Activated T-helper 1 cell treated with anti-CD3 and anti-CD28 coated beads, Interleukin-12 subunit alpha, Interleukin-12 subunit beta, Interleukin-2, Interleukin-4 antibody, amounts not matched to agents 30 ng/mL and 10 ng/mL and 1 ng/mL, durations not matched to agents 14 hours and 24 hours and 36 hours (primary cell): ENCODE measurements at regions of chr1 and their contacts with region 1.

Region 1: DNA sequence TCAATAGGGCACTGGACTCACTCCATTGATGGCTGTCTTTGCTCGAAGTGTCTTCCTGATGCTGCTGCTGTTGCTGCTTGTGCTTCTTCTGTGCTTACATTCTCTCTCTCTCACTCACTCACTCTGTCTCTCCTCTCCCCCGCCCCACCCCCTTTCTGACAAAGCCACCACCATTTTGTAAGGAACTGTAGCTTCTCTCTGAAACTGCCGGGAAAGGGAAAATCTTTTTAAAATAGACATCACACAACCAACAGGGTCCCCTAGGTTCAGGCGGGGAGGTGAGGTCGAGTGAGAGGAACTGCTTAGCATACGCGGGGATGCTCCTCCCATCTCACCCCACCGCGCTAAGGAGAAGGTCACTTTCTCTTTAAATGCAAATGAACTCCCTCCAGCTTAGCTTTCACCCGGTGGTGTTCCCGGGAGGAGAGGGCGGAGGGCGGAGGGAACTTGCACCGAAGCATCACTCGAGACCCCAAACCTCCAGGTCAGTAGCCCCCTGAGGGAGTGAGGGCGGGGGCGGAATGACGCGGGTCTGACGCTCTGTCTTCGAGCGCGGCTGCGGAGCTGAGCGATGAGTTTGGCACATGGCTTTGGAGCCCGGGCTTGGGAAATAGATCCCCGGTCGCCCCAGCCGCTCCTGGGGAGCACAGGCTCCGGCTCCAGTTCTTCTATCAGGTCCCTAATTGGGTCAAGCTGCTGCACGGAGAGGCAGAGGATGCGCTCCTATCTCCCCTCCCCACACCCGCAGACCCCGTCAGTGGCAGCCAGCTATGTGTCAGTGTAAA is at the start of gene CCDC28B:
- DNase-seq: peak; percentile 55
- H3K4me3 Mint-ChIP-seq: peak within 1 kb of the TSS; percentile 92
- H3K27ac Mint-ChIP-seq: peak within 1 kb of the TSS; percentile 97
- H3K4me1 Mint-ChIP-seq: peaks cover 69% of the 10 kb centered on the region
- H3K27me3 Mint-ChIP-seq: no peaks in the 10 kb centered on the region
- total RNA-seq, gene CCDC28B: 28.2 and 32.6 TPM in 2 replicates

Region 2: GRCh38 chr1:32179443-32180185 is 20.8 kb before region 1 on chr1 and contains the start of gene TXLNA:
- intact Hi-C with region 1: loop called (anchors 1 kb)
- DNase-seq: peak; percentile 89
- H3K4me3 Mint-ChIP-seq: peak within 1 kb of the TSS; percentile 96
- H3K27ac Mint-ChIP-seq: peak within 1 kb of the TSS; percentile 93
- H3K4me1 Mint-ChIP-seq: peaks cover 47% of the 10 kb centered on the region
- H3K27me3 Mint-ChIP-seq: no peaks in the 10 kb centered on the region
- total RNA-seq, gene TXLNA: 109 and 110 TPM in 2 replicates

Region 3: GRCh38 chr1:32186077-32186476 is 14.3 kb before region 1 on chr1:
- intact Hi-C with region 1: loop called (anchors 1 kb)
- DNase-seq: no peak
- H3K4me3 Mint-ChIP-seq: peak overlapping the region; percentile 62
- H3K27ac Mint-ChIP-seq: peak overlapping the region; percentile 76
- H3K4me1 Mint-ChIP-seq: peaks cover 51% of the 10 kb centered on the region
- H3K27me3 Mint-ChIP-seq: no peaks in the 10 kb centered on the region

Region 4: DNA sequence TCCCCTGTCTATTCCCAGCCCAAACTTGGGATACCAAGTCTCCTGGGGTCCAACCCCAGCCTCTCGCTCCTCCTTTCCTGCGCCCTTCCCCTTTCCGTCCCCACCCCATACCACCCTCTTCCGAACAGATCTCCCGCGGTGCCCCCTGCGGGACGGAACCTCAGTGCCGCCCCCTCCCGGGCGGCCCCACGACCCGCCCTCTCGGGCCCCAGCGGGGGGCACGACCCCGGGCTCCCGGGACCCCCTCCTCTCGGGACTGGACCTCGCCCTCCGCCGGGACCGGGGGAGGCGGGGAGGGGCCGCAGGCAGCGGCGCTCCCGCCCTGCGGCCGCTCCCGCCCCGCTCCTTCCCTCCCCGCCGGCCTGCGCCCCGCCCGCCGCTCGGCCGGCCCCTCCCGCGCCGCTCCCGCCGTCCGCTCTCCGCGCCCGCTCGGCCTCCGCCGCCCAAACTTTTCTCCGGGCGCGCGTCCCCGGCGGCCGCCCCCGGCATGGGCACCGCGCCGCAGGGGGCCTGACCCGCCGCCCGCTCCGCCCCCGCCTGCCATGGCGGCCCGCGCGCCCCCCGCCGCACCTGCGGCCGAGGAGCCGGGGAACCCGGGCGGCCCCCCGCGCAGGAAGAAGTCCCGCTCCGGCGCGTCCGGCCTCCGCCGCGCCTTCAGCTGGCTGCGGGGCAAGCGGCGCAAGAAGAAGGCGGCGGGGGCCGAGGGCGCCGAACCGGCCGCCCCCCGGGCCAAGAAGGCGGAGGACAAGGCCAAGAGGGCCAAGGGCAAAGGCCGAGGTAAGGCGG is 541.2 kb after region 1 on chr1:
- intact Hi-C with region 1: no loop called
- DNase-seq: no peak
- H3K4me3 Mint-ChIP-seq: peak overlapping the region; percentile 75
- H3K27ac Mint-ChIP-seq: no peak overlapping the region
- H3K4me1 Mint-ChIP-seq: no peaks in the 10 kb centered on the region
- H3K27me3 Mint-ChIP-seq: peaks cover 41% of the 10 kb centered on the region